Endothelial cell of umbilical vein (primary cell): ENCODE measurements at regions of chr4 and their contacts with region 1.

Region 1: GRCh38 chr4:75989846-75990528 is 758 bp downstream of the SDAD1 start:
- DNase-seq: peak; percentile 42
- H3K4me3 ChIP-seq: peak overlapping the region; percentile 61 to 92 (median 91)
- H3K27ac ChIP-seq: peak overlapping the region; percentile 84
- H3K4me1 ChIP-seq: peaks cover 10% of the 10 kb centered on the region
- H3K27me3 ChIP-seq: peaks cover 6 to 8% of the 10 kb centered on the region in 2 experiments
- CTCF ChIP-seq: no peak
- POLR2A ChIP-seq: no peak

Region 2: DNA sequence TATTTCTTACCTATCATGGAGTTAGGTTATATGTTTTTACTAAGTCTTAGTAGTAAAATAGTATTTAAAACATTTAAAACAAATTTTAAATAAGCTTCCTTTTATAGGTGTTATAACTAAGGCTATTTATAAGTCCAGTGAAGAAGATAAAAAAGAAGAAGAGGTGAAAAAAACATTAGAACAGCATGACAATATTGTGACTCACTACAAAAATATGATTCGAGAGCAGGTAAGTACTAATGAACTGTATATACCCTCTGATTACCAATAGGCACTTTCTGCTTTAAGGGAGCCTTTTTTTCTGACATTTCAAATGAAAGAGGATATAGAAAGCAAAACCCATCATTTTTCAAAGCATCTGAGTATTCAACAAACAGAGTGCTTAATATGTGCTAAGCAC is 189.0 kb before region 1 on chr4:
- CTCF ChIA-PET with region 1: no interaction called
- POLR2A ChIA-PET with region 1: no interaction called
- dilution Hi-C with region 1: no loop called
- intact Hi-C with region 1: loop called (anchors 10 kb)
- DNase-seq: peak; percentile 19
- H3K4me3 ChIP-seq: no peak overlapping the region
- H3K27ac ChIP-seq: no peak overlapping the region
- H3K4me1 ChIP-seq: peaks cover 7% of the 10 kb centered on the region
- H3K27me3 ChIP-seq: no peaks in the 10 kb centered on the region
- CTCF ChIP-seq: no peak
- POLR2A ChIP-seq: no peak

Region 3: DNA sequence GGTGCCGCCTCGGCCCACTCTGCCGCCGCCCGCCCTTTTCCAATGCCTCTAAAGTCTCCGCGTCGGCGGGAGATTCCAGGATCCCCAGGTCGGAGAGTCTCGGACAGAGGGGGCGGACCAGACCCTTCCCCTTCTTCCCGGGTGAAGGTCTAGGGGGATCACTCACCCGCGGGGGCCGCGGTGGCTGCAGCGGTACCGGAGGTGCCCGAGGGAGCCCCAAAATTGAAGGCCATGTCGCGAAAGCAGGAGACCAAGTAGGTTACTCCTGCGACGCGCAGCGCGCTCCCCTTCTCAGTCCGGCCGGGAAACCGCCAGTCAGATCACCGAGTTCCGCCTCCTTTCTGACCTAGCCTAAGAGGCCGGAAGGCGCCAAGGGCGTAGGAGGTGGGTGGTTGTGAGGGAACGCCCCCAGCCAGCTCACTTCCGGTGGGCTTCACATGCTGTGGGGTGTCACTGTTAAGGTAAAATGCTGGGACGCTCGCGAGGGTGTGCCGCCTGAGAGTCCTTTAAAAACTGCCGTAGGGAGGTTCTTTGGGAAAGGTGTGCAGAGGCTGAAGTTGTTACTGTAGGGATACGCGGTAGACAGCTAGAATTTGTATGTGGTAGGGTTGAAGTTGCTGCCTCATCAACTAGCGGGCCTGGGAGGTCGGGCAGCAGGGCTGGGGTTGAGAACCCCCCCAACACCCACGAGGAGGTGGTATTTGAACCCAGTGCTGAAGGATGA is 158.3 kb after region 1 on chr4 and contains the start of gene NUP54:
- CTCF ChIA-PET with region 1: no interaction called
- POLR2A ChIA-PET with region 1: no interaction called
- dilution Hi-C with region 1: no loop called
- intact Hi-C with region 1: loop called (anchors 2 kb)
- DNase-seq: peak; percentile 97
- H3K4me3 ChIP-seq: peak within 1 kb of the TSS; percentile 87 to 91 (median 89)
- H3K27ac ChIP-seq: peak within 1 kb of the TSS; percentile 71
- H3K4me1 ChIP-seq: peaks cover 23% of the 10 kb centered on the region
- H3K27me3 ChIP-seq: no peaks in the 10 kb centered on the region
- CTCF ChIP-seq: no peak
- POLR2A ChIP-seq: peak; percentile 64
- total RNA-seq, gene NUP54: 45.7 and 49.9 TPM in 2 replicates